HEK293T (cell line): ENCODE measurements at regions of chr2 and their contacts with region 1.

Region 1: DNA sequence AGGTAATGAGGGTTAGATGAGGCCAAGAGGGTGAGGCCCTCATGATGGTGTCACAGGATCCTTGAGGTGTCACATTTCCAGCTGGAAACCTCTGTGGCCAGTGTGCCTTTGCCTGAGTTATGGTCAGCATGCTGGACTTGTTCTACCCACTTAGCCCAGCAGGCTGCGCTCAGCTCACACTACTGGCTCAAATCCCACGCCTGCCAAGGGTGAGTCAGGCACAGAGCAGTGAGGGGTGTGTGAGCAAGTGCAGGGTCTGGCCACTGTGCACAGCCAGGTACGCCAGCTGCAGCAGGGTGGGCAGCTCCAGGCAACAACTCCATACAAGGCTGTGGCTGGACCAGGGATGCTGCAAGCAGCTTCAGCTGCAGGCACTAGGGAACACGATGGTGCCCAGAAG is 616.6 kb upstream of the FSHR start:
- DNase-seq: peak; percentile 8

Region 2: DNA sequence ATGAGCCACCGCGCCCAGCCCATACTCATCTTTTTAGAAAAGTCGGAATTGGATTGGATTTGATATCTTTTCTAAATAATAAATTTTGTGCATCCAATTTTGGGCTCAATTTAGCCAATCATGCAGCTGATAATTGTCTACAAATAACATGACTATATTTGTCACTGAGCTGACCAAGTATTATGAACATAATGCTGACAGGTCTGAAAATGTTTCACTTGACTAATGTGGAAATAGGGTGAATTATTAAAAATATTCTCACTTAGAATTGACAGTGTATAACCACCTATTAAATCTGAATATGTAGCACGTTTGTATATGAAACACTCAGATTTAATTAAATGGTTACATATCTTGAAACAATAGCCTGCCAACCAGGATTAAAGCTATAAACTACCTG is 40.6 kb after region 1 on chr2:
- CTCF ChIA-PET with region 1: no interaction called
- POLR2A ChIA-PET with region 1: no interaction called
- DNase-seq: no peak

Region 3: DNA sequence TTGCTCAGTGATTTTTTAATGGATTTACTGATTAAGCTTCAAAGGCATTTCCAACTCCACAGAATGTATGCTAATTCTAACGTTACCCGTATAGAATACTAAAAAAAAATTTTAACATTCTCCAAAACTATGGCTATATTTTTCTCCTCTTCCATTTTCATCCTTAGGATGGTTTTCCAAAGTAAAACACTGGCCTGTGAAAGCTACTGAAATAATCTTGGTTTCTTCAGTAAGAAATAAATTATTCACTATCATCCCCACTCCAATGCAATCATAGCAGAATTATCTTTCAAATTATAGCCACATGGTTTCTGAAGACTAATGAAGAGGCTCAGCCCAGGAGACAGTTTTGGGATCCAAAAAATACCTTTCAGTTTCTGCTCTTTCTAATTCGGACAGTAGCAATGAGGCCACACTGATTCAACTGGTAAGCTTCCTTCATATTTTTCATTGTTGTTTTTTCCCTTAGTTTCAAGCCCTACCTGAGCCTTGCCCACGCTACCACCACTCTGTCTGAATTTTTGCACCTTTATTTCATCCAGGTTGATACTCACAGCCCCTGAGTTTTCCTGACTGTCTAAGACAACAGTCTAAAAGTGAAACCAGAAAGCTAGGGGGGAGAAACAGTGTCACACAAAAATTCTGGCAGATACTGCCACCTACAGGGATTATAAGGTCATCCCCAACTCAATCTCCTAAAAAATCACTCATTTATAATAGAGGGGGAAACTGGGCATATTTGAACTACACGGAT is 373.1 kb after region 1 on chr2:
- CTCF ChIA-PET with region 1: interaction called, 15 read pairs
- POLR2A ChIA-PET with region 1: no interaction called
- DNase-seq: peak; percentile 31

Region 4: GRCh38 chr2:50401772-50402653 is 631.1 kb after region 1 on chr2:
- CTCF ChIA-PET with region 1: interaction called, 10 read pairs
- POLR2A ChIA-PET with region 1: no interaction called
- DNase-seq: peak; percentile 38